ENCODE measurements at regions of chr20 and their contacts with region 1.

Region 1: DNA sequence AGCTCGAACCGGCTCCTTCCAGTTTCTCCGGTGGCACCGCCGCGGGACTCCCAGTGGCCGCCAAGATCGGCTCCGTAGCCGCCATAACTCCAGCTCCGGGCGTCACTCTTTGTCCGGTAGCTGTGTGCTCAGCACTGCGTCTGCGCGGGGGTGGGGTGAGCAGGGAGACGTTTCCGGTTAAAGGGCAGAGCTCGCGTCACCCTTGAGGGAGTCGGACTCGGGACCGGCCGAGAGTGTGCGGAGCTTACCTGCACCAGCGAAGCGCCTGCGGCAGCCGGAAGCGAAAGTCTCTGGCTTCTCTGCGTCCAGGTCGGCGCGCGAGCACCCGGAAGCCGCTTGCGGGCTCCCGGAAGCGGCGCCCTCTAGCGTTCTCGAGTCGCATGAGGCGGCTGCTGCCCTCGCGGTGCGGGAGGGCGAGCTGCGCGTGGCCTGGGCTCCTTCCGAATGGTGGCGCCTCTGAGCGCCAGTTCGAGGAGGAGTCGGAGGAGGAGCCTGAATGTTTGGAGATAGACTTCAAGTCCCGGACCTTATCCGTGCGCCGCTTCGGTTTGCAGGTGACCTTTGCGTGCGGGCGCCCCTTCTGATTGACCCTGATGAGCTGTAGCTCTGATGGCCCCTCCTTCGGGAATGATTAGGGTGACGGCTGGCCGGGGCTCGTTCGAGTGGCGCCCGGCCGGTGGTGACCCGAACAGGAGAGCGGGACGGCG is at the start of gene SCAND1:
- DNase-seq: peak; percentile 99
- ATAC-seq: peak; percentile 87
- H3K4me3 ChIP-seq: peak within 1 kb of the TSS; percentile 72 to 96 (median 91)
- H3K4me3 Mint-ChIP-seq: peak within 1 kb of the TSS; percentile 100
- H3K27ac ChIP-seq: peak within 1 kb of the TSS; percentile 98 to 99
- H3K27ac Mint-ChIP-seq: peak within 1 kb of the TSS; percentile 100
- H3K4me1 ChIP-seq: peaks cover 17 to 24% of the 10 kb centered on the region in 2 donors
- H3K4me1 Mint-ChIP-seq: peaks cover 22% of the 10 kb centered on the region
- H3K27me3 ChIP-seq: no peaks in the 10 kb centered on the region
- H3K27me3 Mint-ChIP-seq: no peaks in the 10 kb centered on the region
- CTCF ChIP-seq: peak; percentile 97
- total RNA-seq, gene SCAND1: 40.8 and 42.0 TPM in 2 replicates

Region 2: DNA sequence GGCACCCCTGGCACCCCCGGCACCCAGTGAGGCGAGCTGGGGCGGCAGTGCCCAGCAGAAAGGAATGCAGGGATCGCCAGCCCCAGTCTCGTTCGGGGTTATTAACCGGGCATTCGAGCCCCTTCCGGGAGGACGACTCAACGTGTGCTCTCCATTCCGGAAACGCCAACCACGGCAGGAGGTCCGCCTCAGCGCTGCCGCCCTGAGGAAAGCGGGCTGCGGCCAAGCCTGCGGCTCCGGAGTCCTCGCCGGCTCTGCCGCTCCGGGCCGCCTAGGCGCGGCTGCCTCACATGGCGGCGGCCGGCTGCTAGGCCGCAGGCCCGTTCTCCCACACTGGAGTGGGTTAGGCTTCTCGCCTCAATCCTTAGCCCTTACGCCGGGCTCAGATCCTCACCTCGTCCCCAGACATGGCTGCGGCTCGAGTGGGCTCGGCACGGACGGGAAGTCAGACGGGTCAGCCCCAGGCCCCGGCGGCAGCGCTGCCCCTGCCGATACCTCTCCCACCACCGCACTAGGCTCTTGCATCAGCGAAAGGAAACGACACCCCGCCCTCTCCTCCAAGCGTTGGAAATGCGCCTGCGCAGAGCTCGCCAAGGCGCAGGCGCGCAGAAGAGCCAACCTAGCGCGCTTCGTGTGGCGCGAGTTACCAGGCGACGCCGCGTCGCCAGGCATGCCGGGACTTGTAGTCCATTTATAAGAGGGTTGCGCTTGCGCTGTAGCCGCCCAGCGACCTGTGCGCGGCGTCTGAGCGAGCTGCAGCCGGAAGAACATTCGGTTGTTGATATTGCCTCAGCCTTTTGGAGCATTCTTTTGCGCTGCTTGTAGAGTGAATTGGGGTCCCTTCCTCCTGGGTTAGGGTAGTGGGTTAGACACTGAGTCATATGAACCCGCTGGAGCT is 1842.4 kb before region 1 on chr20 and contains the start of gene EIF2S2:
- CTCF ChIA-PET with region 1: no interaction called
- POLR2A ChIA-PET with region 1: no interaction called
- intact Hi-C with region 1: loop called (anchors 10 kb)
- DNase-seq: peak; percentile 99
- ATAC-seq: peak; percentile 91
- H3K4me3 ChIP-seq: peak within 1 kb of the TSS; percentile 63 to 97 (median 90)
- H3K4me3 Mint-ChIP-seq: peak within 1 kb of the TSS; percentile 99
- H3K27ac ChIP-seq: peak within 1 kb of the TSS; percentile 80 to 95
- H3K27ac Mint-ChIP-seq: peak within 1 kb of the TSS; percentile 99
- H3K4me1 ChIP-seq: peaks cover 21 to 28% of the 10 kb centered on the region in 2 donors
- H3K4me1 Mint-ChIP-seq: peaks cover 45% of the 10 kb centered on the region
- H3K27me3 ChIP-seq: no peaks in the 10 kb centered on the region
- H3K27me3 Mint-ChIP-seq: no peaks in the 10 kb centered on the region
- CTCF ChIP-seq: no peak
- total RNA-seq, gene EIF2S2: 26.4 and 27.7 TPM in 2 replicates

Region 3: DNA sequence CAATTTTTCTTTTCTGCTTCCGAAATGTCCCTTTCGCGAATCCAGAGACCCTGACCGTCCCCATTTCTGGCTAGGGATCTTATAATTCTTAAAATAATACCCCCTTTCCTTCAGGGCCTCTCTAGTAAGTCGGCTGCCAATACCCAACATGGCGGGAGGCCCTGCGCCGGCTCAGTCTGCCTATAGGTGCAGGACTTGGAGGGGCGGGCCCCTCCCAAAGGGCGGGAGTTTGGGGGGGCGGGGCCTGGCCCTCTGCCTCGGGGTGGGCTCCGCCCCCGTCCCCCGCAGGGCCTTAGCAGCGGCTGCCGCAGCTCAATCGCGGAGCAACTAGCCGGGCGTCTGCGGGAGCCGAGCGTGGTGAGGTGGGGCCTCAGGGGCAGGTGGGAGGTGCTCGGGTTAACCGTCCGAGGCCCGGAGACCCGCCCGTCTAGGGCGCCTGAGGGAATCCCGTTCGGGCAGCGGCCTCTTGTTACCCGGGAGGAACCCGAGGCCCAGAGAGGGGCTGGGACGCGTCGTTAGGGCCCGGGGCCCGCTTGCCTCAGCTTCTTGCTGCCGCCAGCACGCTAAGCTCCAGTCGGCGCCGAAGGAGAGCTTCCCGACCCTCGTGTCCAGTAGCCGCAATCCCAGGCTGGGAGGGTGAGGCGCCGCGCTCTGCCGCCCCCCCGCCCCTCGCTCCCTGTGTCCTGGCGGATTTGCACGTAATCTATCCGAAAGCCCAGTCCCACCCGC is 499.3 kb before region 1 on chr20 and contains the start of gene CEP250:
- CTCF ChIA-PET with region 1: interaction called, 5 read pairs
- POLR2A ChIA-PET with region 1: interaction called, 4 read pairs
- intact Hi-C with region 1: loop called (anchors 1 kb)
- DNase-seq: peak; percentile 97
- ATAC-seq: peak; percentile 99
- H3K4me3 ChIP-seq: peak within 1 kb of the TSS; percentile 71 to 97 (median 94)
- H3K4me3 Mint-ChIP-seq: peak within 1 kb of the TSS; percentile 87
- H3K27ac ChIP-seq: peak within 1 kb of the TSS; percentile 82 to 97
- H3K27ac Mint-ChIP-seq: peak within 1 kb of the TSS; percentile 97
- H3K4me1 ChIP-seq: peaks cover 0 to 17% of the 10 kb centered on the region in 2 donors
- H3K4me1 Mint-ChIP-seq: peaks cover 16% of the 10 kb centered on the region
- H3K27me3 ChIP-seq: no peaks in the 10 kb centered on the region
- H3K27me3 Mint-ChIP-seq: no peaks in the 10 kb centered on the region
- CTCF ChIP-seq: no peak
- total RNA-seq, gene CEP250: 78.4 and 78.5 TPM in 2 replicates

Region 4: GRCh38 chr20:35664544-35665221 is 289.7 kb before region 1 on chr20 and contains the starts of genes CPNE1 and RBM12:
- CTCF ChIA-PET with region 1: no interaction called
- POLR2A ChIA-PET with region 1: interaction called, 8 read pairs
- intact Hi-C with region 1: loop called (anchors 2 kb)
- DNase-seq: peak; percentile 96
- ATAC-seq: peak; percentile 77
- H3K4me3 ChIP-seq: peak within 1 kb of the TSS; percentile 76 to 98 (median 90)
- H3K4me3 Mint-ChIP-seq: peak within 1 kb of the TSS; percentile 92
- H3K27ac ChIP-seq: peak within 1 kb of the TSS; percentile 96 to 97
- H3K27ac Mint-ChIP-seq: peak within 1 kb of the TSS; percentile 100
- H3K4me1 ChIP-seq: peaks cover 39 to 42% of the 10 kb centered on the region in 2 donors
- H3K4me1 Mint-ChIP-seq: peaks cover 48% of the 10 kb centered on the region
- H3K27me3 ChIP-seq: no peaks in the 10 kb centered on the region
- H3K27me3 Mint-ChIP-seq: no peaks in the 10 kb centered on the region
- CTCF ChIP-seq: no peak
- total RNA-seq, gene CPNE1: 323 and 331 TPM in 2 replicates
- total RNA-seq, gene RBM12: 144 and 145 TPM in 2 replicates

Region 5: GRCh38 chr20:35942243-35942642 is 12.1 kb before region 1 on chr20:
- CTCF ChIA-PET with region 1: interaction called, 10 read pairs
- POLR2A ChIA-PET with region 1: interaction called, 3 read pairs
- intact Hi-C with region 1: no loop called
- DNase-seq: no peak
- ATAC-seq: no peak
- H3K4me3 ChIP-seq: no peak overlapping the region
- H3K4me3 Mint-ChIP-seq: no peak overlapping the region
- H3K27ac ChIP-seq: no peak overlapping the region
- H3K27ac Mint-ChIP-seq: no peak overlapping the region
- H3K4me1 ChIP-seq: no peaks in the 10 kb centered on the region
- H3K4me1 Mint-ChIP-seq: no peaks in the 10 kb centered on the region
- H3K27me3 ChIP-seq: no peaks in the 10 kb centered on the region
- H3K27me3 Mint-ChIP-seq: no peaks in the 10 kb centered on the region
- CTCF ChIP-seq: no peak

Region 6: GRCh38 chr20:36064658-36065426 is 110.5 kb after region 1 on chr20:
- CTCF ChIA-PET with region 1: no interaction called
- POLR2A ChIA-PET with region 1: interaction called, 7 read pairs
- intact Hi-C with region 1: loop called (anchors 1 kb)
- DNase-seq: peak; percentile 95
- ATAC-seq: peak; percentile 97
- H3K4me3 ChIP-seq: peak overlapping the region; percentile 52 to 77 (median 72)
- H3K4me3 Mint-ChIP-seq: peak overlapping the region; percentile 94
- H3K27ac ChIP-seq: peak overlapping the region; percentile 24 to 83
- H3K27ac Mint-ChIP-seq: peak overlapping the region; percentile 89
- H3K4me1 ChIP-seq: peaks cover 11 to 17% of the 10 kb centered on the region in 2 donors
- H3K4me1 Mint-ChIP-seq: peaks cover 6% of the 10 kb centered on the region
- H3K27me3 ChIP-seq: peaks cover 0 to 7% (median 1%) of the 10 kb centered on the region in 4 experiments
- H3K27me3 Mint-ChIP-seq: peaks cover 4% of the 10 kb centered on the region
- CTCF ChIP-seq: no peak

Region 7: DNA sequence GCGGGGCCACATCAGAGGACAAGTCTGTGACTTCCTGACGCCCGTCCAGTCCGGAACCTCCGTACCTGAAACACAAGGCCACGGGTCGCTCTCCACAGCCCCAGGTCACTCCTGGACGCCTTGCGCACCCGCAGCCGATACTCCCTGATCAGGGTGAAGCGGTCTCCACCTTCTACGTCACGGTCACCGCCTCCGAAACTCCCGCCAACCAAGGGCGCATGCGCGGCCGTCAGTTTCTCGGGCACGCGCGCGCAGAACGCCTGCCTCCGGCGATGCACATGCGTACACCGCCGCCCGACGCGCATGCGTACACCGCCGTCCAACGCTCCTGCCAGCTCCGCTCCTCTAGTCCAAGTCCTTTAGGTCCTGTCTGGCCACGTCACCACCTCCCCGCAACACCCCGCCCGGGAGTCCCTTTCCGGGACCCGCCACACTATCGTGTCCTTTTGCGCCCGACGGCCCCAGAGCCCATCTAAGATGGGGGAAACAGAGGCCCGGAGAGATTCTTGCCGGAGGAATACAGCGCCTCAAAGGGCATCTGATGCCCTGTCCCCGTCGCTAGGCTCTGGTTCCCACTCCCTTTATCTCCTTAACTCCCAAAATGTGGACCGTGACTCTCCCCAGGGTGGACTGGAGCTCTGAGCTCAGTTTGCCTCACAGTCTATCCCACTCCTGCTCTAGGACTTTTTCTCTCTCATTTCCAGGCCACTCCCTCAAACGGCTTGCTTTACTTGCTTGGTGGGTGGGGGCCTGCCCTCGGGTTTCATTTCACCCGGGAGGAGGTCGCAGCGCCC is 819.4 kb after region 1 on chr20 and contains the start of gene DSN1:
- CTCF ChIA-PET with region 1: no interaction called
- POLR2A ChIA-PET with region 1: no interaction called
- intact Hi-C with region 1: loop called (anchors 5 kb)
- DNase-seq: peak; percentile 98
- ATAC-seq: peak; percentile 86
- H3K4me3 ChIP-seq: peak within 1 kb of the TSS; percentile 84 to 96 (median 92)
- H3K4me3 Mint-ChIP-seq: peak within 1 kb of the TSS; percentile 89
- H3K27ac ChIP-seq: peak within 1 kb of the TSS; percentile 77 to 92
- H3K27ac Mint-ChIP-seq: peak within 1 kb of the TSS; percentile 99
- H3K4me1 ChIP-seq: peaks cover 8 to 16% of the 10 kb centered on the region in 2 donors
- H3K4me1 Mint-ChIP-seq: peaks cover 33% of the 10 kb centered on the region
- H3K27me3 ChIP-seq: no peaks in the 10 kb centered on the region
- H3K27me3 Mint-ChIP-seq: no peaks in the 10 kb centered on the region
- CTCF ChIP-seq: no peak
- total RNA-seq, gene DSN1: 17.1 and 18.4 TPM in 2 replicates

Measured in B cell (primary cell).